ENCODE measurements at regions of chr6 and their contacts with region 1.

Region 1: DNA sequence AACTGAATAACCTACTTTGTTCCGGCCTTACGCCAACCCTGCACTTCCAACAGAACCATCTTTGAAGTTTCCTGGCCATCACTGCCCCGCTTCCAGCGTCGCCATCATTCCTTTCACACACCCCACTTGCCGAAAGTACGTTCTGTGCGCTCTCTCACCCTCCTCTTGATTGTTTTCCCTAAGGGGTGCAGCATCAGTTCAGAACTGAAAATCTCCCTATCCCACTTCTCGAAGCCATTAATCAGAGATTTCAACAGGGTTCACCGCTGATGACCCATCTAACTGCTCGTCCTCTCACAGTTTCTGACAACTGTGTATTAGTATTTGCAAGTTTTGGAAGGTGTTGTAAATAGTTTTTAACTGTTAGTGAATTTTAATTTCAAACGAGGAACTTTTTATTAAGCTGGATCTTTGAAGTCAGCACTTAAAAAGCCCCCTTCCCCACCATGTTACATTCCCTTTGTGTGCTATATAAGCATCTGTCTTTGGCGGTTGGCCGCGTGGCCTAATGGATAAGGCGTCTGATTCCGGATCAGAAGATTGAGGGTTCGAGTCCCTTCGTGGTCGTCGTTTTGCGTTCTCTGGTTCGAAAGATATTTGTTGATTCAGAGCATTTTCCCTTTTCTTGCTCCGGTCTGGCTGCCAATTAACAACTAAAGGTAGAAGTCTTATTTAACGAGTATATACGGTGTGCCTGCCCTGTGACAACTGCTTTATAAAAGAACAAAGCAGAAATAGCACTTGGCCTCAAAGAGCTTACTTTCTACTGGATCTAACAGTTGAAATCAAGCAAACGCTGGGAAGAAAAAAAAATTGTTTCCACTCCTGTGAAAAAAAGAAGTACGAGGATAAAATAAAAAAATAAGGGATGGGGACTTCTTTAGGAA is 42.6 kb downstream of the TRIM27 start:
- DNase-seq: peak; percentile 78
- H3K4me3 Mint-ChIP-seq: peak overlapping the region; percentile 65
- H3K27ac Mint-ChIP-seq: peak overlapping the region; percentile 24
- H3K4me1 Mint-ChIP-seq: peaks cover 28% of the 10 kb centered on the region
- H3K27me3 Mint-ChIP-seq: peaks cover 14% of the 10 kb centered on the region

Region 2: DNA sequence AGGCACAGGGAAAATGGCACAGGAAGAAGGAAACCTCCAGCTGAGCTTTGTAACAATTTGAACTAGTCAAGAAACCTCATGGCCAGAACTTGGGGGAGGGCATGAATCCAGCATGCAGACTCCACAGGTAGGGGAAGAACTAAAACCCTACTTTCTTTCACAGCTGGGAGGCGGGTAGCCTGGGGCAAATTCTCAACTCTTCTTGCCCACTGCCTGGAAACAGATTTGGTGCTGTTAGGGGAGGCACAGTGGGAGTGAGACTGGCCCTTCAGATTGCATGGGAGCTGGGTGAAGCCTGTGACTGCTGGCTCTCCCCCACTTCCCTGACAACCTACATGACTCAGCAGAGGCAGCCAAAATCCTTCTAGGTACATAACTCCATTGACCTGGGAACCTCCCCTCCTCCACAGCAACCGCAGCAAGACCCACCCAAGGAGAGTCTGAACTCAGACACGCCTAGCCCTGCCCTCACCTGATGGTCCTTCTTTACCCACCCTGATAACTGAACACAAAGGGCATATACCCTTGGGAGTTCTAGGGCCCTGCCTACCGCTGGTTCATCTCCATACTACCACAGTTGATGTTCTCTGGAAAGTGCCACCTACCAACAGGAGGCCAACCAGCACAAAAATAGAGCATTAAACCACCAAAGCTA is 79.8 kb after region 1 on chr6:
- CTCF ChIA-PET with region 1: no interaction called
- POLR2A ChIA-PET with region 1: no interaction called
- intact Hi-C with region 1: no loop called
- DNase-seq: no peak
- H3K4me3 Mint-ChIP-seq: no peak overlapping the region
- H3K27ac Mint-ChIP-seq: peak overlapping the region; percentile 33
- H3K4me1 Mint-ChIP-seq: no peaks in the 10 kb centered on the region
- H3K27me3 Mint-ChIP-seq: peaks cover 14% of the 10 kb centered on the region

Region 3: DNA sequence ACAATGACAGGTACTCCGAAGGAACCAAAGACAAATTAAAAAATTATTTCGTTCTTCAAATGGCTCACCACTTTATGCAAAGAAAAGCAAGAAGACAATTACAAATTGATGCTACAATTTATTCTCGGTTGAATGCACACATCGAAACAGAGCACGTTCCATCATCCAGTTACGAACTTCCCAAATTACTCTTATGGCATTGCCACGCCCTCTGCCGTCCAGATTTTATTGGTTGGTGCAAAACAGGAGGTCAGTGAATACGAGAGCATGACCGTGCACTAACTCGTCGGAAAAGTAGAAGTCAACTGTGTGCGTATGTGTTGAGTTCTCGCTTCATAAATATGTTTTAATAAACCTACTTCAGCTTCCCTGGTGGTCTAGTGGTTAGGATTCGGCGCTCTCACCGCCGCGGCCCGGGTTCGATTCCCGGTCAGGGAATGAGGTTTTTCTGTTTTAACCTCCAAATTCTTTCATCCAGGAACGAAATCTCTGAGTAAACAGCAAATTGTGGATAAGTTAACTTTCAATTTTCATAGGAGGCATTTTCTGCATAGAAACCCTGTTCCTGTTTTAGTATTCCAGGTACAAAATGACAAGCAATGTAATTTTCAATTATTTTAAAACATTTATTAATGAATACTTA is 100.8 kb after region 1 on chr6:
- CTCF ChIA-PET with region 1: no interaction called
- POLR2A ChIA-PET with region 1: no interaction called
- intact Hi-C with region 1: loop called (anchors 1 kb)
- DNase-seq: peak; percentile 80
- H3K4me3 Mint-ChIP-seq: peak overlapping the region; percentile 82
- H3K27ac Mint-ChIP-seq: peak overlapping the region; percentile 93
- H3K4me1 Mint-ChIP-seq: peaks cover 58% of the 10 kb centered on the region
- H3K27me3 Mint-ChIP-seq: peaks cover 27% of the 10 kb centered on the region